Naive thymus-derived CD4-positive, alpha-beta T cell (primary cell): ENCODE measurements at regions of chr22 and their contacts with region 1.

Region 1: DNA sequence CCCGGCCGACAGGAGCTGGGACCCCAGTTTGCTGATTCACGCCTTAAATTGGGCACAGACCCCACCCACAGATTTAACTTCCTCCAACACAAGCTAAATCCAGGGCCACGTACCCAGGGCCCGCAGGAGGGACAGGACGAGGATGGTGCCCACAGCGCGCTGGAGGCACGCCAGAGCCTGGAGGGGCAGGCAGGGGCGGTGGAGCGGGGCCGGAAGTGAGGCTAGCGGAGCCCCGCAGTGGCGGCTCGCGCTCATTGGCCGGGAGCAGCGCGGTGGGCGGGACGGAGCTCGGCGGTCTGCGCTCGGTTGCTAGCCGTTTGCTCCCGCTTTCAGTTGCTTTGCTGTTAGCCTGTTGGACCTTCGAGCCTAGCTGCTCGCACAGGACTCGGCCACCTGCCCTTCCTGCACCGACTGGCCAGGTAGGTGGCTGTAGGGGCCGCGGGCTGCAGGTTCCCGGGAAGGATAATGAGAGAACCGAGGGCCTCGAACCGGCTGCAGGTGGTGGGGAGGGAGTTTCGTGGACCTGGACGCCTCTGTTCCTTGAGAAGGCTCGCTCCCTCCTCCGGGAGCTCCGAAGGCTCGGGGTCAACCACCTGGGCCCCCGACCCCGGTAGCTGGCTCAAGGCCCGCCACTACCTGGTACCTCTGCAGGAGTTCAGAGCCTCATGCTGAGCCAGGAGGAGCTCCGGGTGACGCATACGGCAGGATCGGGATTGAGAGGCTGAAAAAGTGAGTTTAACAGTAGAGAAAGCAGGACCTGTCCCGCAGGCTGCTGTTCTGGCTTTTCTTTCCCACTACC is at the start of gene CCDC134:
- DNase-seq: peak; percentile 87 to 94 (median 92)
- ATAC-seq: peak; percentile 99
- H3K4me3 ChIP-seq: peak within 1 kb of the TSS; percentile 88
- H3K4me3 Mint-ChIP-seq: peak within 1 kb of the TSS; percentile 81 to 97 (median 95)
- H3K27ac ChIP-seq: peak within 1 kb of the TSS; percentile 88
- H3K27ac Mint-ChIP-seq: peak within 1 kb of the TSS; percentile 94 to 100 (median 98)
- H3K4me1 ChIP-seq: peaks cover 17 to 19% of the 10 kb centered on the region in 2 donors
- H3K4me1 Mint-ChIP-seq: peaks cover 8 to 49% (median 41%) of the 10 kb centered on the region in 7 donors
- H3K27me3 ChIP-seq: no peaks in the 10 kb centered on the region
- H3K27me3 Mint-ChIP-seq: no peaks in the 10 kb centered on the region
- total RNA-seq, gene CCDC134: 13.7 to 22.8 (median 18.2) TPM

Region 2: DNA sequence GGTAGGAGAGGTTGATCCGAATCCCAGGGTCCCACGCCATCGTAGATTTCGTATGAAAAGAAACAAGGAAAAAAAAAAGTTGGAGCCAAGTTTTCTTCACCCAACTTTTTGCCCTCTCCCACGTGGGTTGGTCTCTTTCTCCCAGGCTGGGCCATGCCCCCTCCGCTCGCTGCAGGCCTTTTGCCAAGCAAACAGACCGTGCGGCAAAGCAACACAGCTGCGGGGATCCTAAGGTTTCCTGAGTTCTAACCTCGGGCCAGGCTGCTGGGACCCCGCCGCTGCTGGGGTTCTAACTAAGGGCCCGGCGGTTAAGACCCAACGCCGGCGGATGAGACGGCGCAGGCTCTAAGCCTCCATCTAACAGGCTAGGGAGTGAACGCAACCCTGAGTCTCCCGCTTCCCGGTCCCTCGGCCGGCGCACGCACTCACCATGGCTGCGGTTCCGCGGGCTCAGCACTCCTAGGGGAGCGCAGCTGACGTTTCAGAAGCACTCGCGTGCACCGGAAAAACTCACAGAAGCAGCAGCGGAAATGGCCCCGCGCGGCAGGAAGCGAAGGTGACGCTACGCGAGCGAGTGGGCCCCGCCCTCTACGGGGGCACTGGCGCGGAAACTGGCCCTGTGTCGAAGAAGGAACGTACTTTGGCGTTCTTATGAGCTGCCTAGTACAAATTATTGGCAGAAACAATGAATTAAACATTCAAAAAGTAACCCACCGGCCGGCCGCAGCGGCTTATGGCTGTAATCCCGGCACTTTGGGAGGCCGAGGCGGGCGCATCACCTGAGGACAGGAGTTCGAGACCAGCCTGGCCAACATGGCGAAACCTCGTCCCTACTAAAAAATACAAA is 112.0 kb before region 1 on chr22 and contains the start of gene SNU13:
- CTCF ChIA-PET with region 1: no interaction called
- POLR2A ChIA-PET with region 1: interaction called, 29 read pairs
- intact Hi-C with region 1: loop called (anchors 1 to 2 kb)
- DNase-seq: peak; percentile 79 to 94 (median 92)
- ATAC-seq: peak; percentile 97
- H3K4me3 ChIP-seq: peak within 1 kb of the TSS; percentile 98
- H3K4me3 Mint-ChIP-seq: peak within 1 kb of the TSS; percentile 90 to 100 (median 96)
- H3K27ac ChIP-seq: peak within 1 kb of the TSS; percentile 95
- H3K27ac Mint-ChIP-seq: peak within 1 kb of the TSS; percentile 94 to 100 (median 99)
- H3K4me1 ChIP-seq: peaks cover 12 to 13% of the 10 kb centered on the region in 2 donors
- H3K4me1 Mint-ChIP-seq: peaks cover 18 to 51% (median 37%) of the 10 kb centered on the region in 7 donors
- H3K27me3 ChIP-seq: no peaks in the 10 kb centered on the region
- H3K27me3 Mint-ChIP-seq: no peaks in the 10 kb centered on the region
- total RNA-seq, gene SNU13: 117 to 180 (median 122) TPM

Region 3: GRCh38 chr22:41746567-41747400 is 53.8 kb before region 1 on chr22:
- CTCF ChIA-PET with region 1: interaction called, 26 read pairs
- POLR2A ChIA-PET with region 1: interaction called, 19 read pairs
- intact Hi-C with region 1: loop called in 1 of 2 experiments (anchors 1 kb)
- DNase-seq: peak; percentile 23 to 65 (median 52)
- ATAC-seq: peak; percentile 92
- H3K4me3 ChIP-seq: no peak overlapping the region
- H3K4me3 Mint-ChIP-seq: no peak overlapping the region
- H3K27ac ChIP-seq: no peak overlapping the region
- H3K27ac Mint-ChIP-seq: peak overlapping the region in 2 of 9 donors; percentile 2 to 36
- H3K4me1 ChIP-seq: no peaks in the 10 kb centered on the region
- H3K4me1 Mint-ChIP-seq: peaks cover 0 to 6% (median 0%) of the 10 kb centered on the region in 7 donors
- H3K27me3 ChIP-seq: no peaks in the 10 kb centered on the region
- H3K27me3 Mint-ChIP-seq: peaks cover 0 to 48% (median 0%) of the 10 kb centered on the region in 5 donors

Region 4: GRCh38 chr22:41780746-41781505 is 19.6 kb before region 1 on chr22:
- CTCF ChIA-PET with region 1: interaction called, 21 read pairs
- POLR2A ChIA-PET with region 1: interaction called, 366 read pairs
- intact Hi-C with region 1: loop called (anchors 1 kb)
- DNase-seq: peak; percentile 64 to 99 (median 96)
- ATAC-seq: peak; percentile 97
- H3K4me3 ChIP-seq: peak overlapping the region; percentile 67
- H3K4me3 Mint-ChIP-seq: peak overlapping the region; percentile 77 to 93 (median 89)
- H3K27ac ChIP-seq: peak overlapping the region; percentile 88
- H3K27ac Mint-ChIP-seq: peak overlapping the region; percentile 98 to 100 (median 100)
- H3K4me1 ChIP-seq: peaks cover 19 to 25% of the 10 kb centered on the region in 2 donors
- H3K4me1 Mint-ChIP-seq: peaks cover 32 to 71% (median 51%) of the 10 kb centered on the region in 7 donors
- H3K27me3 ChIP-seq: no peaks in the 10 kb centered on the region
- H3K27me3 Mint-ChIP-seq: no peaks in the 10 kb centered on the region

Region 5: GRCh38 chr22:41832553-41833368 is 32.2 kb after region 1 on chr22 and contains the start of gene SREBF2:
- CTCF ChIA-PET with region 1: no interaction called
- POLR2A ChIA-PET with region 1: interaction called, 36 read pairs
- intact Hi-C with region 1: loop called (anchors 1 kb)
- DNase-seq: peak; percentile 93 to 99 (median 97)
- ATAC-seq: peak; percentile 96
- H3K4me3 ChIP-seq: peak within 1 kb of the TSS; percentile 99
- H3K4me3 Mint-ChIP-seq: peak within 1 kb of the TSS; percentile 90 to 98 (median 95)
- H3K27ac ChIP-seq: peak within 1 kb of the TSS; percentile 97
- H3K27ac Mint-ChIP-seq: peak within 1 kb of the TSS; percentile 94 to 100 (median 99)
- H3K4me1 ChIP-seq: peaks cover 0 to 10% of the 10 kb centered on the region in 2 donors
- H3K4me1 Mint-ChIP-seq: peaks cover 15 to 54% (median 30%) of the 10 kb centered on the region in 7 donors
- H3K27me3 ChIP-seq: no peaks in the 10 kb centered on the region
- H3K27me3 Mint-ChIP-seq: peaks cover 0 to 2% (median 0%) of the 10 kb centered on the region in 5 donors
- total RNA-seq, gene SREBF2: 71.5 to 117 (median 101) TPM

Region 6: GRCh38 chr22:42444077-42444904 is 643.7 kb after region 1 on chr22:
- CTCF ChIA-PET with region 1: no interaction called
- POLR2A ChIA-PET with region 1: interaction called, 11 read pairs
- intact Hi-C with region 1: no loop called
- DNase-seq: peak; percentile 61 to 88 (median 82)
- ATAC-seq: peak; percentile 92
- H3K4me3 ChIP-seq: peak overlapping the region; percentile 68
- H3K4me3 Mint-ChIP-seq: peak overlapping the region; percentile 77 to 94 (median 84)
- H3K27ac ChIP-seq: peak overlapping the region; percentile 71
- H3K27ac Mint-ChIP-seq: peak overlapping the region; percentile 88 to 98 (median 94)
- H3K4me1 ChIP-seq: peaks cover 15% of the 10 kb centered on the region in 2 donors
- H3K4me1 Mint-ChIP-seq: peaks cover 9 to 34% (median 26%) of the 10 kb centered on the region in 7 donors
- H3K27me3 ChIP-seq: no peaks in the 10 kb centered on the region
- H3K27me3 Mint-ChIP-seq: peaks cover 0 to 3% (median 0%) of the 10 kb centered on the region in 5 donors